Activated naive CD4-positive, alpha-beta T cell treated with anti-CD3 and anti-CD28 coated beads for 36 hours (primary cell): ENCODE measurements at regions of chr10 and their contacts with region 1.

Region 1: DNA sequence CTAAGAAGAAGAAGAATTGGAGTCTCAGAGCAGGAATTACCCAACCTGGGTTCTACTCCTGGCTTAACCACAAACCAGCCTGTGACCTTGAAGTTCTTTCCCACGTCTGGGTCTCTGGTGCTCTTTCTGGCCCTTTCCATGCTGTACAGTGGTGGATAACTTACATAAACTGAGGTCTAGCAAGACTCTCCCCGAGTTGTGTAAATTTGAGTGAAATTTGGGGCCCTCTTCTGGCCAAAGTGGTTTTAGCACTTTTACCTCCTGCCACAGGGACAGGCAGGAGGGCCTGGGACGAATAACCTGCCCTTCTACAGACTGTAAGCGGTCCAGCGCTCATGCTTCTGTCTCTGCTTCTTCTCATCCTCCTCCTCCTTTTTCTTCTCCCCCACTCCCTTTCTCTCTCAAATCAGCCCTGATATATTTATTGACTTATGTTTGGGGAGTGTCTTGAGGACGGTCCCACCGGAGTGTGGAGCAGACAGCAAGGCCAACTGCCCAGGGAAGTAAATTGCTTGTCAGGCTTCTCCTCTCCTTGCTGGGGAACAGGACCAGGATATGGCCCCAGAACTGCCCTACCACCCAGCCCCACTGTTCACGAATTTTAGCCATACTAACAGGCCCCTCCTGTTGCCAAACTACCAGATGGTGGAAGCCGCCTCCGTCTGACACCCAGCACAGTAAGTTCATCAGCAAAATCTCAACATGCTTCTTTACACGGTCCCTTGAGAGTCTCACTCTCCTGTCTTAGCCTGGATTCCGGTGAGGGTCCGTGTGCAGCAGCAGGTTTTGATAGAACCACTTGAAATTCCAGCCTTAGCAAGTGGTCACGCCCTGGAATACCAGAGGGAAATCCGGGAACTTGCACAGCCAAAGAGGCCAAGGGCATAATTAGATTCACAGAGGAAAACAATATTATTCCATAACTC is 4.0 kb upstream of the SH3PXD2A start:
- DNase-seq: peak; percentile 79
- H3K4me3 Mint-ChIP-seq: no peak overlapping the region
- H3K27ac Mint-ChIP-seq: no peak overlapping the region
- H3K4me1 Mint-ChIP-seq: peaks cover 3% of the 10 kb centered on the region
- H3K27me3 Mint-ChIP-seq: peaks cover 17% of the 10 kb centered on the region

Region 2: DNA sequence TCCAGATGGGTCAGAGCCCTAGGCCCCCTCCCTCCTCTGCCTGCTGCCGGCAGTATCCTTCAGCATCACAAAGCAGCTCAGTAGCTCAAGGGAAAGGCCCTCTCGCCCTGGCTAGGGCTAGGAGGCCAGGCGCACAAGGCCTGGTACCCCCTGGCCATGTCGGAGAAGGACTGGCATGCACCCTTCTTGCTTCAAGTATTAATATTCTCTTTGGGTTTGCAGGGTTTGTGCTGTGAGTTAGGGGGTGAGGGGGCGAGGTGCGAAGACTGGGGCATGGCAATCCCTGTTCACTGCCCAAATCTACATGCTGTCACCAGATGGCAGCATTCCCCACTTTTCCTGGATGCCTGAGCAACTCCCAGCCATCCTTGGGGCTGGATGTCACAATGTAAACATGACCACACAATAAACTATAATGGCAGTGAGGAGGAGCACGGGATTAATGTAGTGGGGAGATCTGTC is 260.7 kb before region 1 on chr10:
- CTCF ChIA-PET with region 1: no interaction called
- intact Hi-C with region 1: loop called (anchors 2 kb)
- DNase-seq: peak; percentile 60
- H3K4me3 Mint-ChIP-seq: no peak overlapping the region
- H3K27ac Mint-ChIP-seq: no peak overlapping the region
- H3K4me1 Mint-ChIP-seq: no peaks in the 10 kb centered on the region
- H3K27me3 Mint-ChIP-seq: no peaks in the 10 kb centered on the region

Region 3: GRCh38 chr10:103712570-103713498 is 146.6 kb before region 1 on chr10:
- CTCF ChIA-PET with region 1: interaction called, 51 read pairs
- intact Hi-C with region 1: loop called (anchors 1 kb)
- DNase-seq: peak; percentile 92
- H3K4me3 Mint-ChIP-seq: no peak overlapping the region
- H3K27ac Mint-ChIP-seq: no peak overlapping the region
- H3K4me1 Mint-ChIP-seq: no peaks in the 10 kb centered on the region
- H3K27me3 Mint-ChIP-seq: no peaks in the 10 kb centered on the region

Region 4: DNA sequence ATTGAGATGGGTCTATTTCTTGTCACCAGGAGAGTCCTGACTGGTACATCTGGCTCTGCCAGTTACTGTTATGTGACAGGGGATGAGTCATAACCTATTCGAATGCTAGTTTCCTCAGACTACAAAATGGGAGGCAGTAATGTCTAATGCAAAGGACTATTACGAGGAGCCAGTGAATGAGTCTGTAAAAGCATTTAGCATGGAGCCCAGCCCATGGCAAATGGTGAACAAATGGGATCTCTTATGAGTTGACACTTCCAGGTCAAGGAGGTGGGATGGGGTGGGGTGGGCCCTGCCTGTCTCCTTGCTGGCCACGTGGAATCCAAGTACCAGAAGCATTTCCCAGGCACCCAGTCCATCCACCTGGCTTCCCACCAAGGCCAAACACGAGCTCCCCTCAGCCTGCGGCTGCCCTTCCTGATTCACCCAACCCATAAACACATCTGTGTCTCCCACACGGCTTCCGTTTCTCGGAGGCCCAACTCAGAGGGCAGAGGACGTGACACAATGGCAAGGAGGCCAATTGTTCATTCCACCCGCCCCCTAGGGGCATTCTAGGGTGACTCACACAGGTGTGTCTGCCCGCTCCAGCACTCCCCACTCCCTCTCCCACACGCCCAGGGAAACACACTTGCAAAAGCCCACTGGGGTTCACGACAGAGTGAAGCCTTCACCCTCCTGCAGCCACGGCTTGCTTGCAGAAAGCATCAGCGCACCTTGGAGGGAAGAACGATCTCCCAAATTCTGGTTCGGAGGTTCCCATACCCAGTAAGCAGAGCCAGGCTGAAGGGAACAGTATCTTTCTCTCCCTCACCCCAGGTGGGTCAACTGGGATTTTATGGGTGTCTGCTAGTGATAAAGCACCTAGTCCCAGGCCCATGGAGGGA is 113.8 kb before region 1 on chr10:
- CTCF ChIA-PET with region 1: interaction called, 4 read pairs
- intact Hi-C with region 1: loop called (anchors 2 kb)
- DNase-seq: peak; percentile 78
- H3K4me3 Mint-ChIP-seq: peak overlapping the region; percentile 19
- H3K27ac Mint-ChIP-seq: peak overlapping the region; percentile 82
- H3K4me1 Mint-ChIP-seq: peaks cover 36% of the 10 kb centered on the region
- H3K27me3 Mint-ChIP-seq: no peaks in the 10 kb centered on the region

Region 5: GRCh38 chr10:103752680-103753248 is 106.7 kb before region 1 on chr10:
- CTCF ChIA-PET with region 1: interaction called, 4 read pairs
- intact Hi-C with region 1: loop called (anchors 2 kb)
- DNase-seq: peak; percentile 64
- H3K4me3 Mint-ChIP-seq: no peak overlapping the region
- H3K27ac Mint-ChIP-seq: no peak overlapping the region
- H3K4me1 Mint-ChIP-seq: peaks cover 12% of the 10 kb centered on the region
- H3K27me3 Mint-ChIP-seq: no peaks in the 10 kb centered on the region

Region 6: DNA sequence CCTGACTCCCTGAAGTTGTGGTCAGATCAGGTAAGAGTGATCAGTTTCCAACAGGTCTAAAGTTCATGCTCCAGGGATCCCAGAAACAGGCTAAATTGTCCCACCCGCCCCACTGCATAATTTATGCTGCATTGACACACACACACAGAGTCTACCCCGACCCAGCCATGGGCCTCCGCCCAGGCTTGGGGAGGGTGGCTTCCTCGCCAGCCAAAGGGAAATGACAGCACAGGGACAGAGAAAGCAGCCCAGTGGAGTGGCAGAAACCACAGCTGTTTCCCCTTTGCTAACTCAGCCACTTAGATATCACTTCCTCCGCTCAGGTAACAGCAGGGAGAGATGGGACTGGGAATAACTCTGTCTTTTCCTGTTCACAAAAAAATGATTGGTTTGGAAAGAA is 13.5 kb before region 1 on chr10:
- CTCF ChIA-PET with region 1: interaction called, 12 read pairs
- intact Hi-C with region 1: no loop called
- DNase-seq: peak; percentile 61
- H3K4me3 Mint-ChIP-seq: no peak overlapping the region
- H3K27ac Mint-ChIP-seq: no peak overlapping the region
- H3K4me1 Mint-ChIP-seq: peaks cover 17% of the 10 kb centered on the region
- H3K27me3 Mint-ChIP-seq: no peaks in the 10 kb centered on the region

Region 7: DNA sequence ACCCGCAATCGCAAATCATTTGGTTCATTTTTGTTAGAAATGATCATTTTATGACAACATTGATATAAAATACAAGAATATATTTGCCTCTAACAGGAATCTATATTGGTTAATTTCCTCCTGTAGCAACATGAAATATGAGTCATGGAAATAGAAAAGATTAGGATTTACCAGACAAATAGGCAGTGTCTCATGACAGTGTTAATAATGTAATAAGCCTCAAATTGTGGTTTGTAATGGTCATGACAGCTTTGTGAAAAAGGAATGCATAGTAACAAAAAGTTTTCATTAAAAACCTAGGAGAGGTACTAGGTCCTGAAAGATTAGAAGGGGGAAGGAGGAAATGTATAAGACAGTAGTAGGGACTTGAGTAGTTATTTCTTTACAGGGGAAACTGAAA is 99.6 kb after region 1 on chr10:
- CTCF ChIA-PET with region 1: no interaction called
- intact Hi-C with region 1: no loop called
- DNase-seq: no peak
- H3K4me3 Mint-ChIP-seq: no peak overlapping the region
- H3K27ac Mint-ChIP-seq: no peak overlapping the region
- H3K4me1 Mint-ChIP-seq: no peaks in the 10 kb centered on the region
- H3K27me3 Mint-ChIP-seq: no peaks in the 10 kb centered on the region

Region 8: GRCh38 chr10:104300736-104301292 is 441.4 kb after region 1 on chr10:
- CTCF ChIA-PET with region 1: no interaction called
- intact Hi-C with region 1: no loop called
- DNase-seq: peak; percentile 67
- H3K4me3 Mint-ChIP-seq: peak overlapping the region; percentile 64
- H3K27ac Mint-ChIP-seq: peak overlapping the region; percentile 78
- H3K4me1 Mint-ChIP-seq: peaks cover 36% of the 10 kb centered on the region
- H3K27me3 Mint-ChIP-seq: peaks cover under 1% of the 10 kb centered on the region